Sigmoid colon (tissue), 7 donors: ENCODE measurements at regions of chr11 and their contacts with region 1.

Region 1: GRCh38 chr11:114400217-114400914 is at the starts of genes C11orf71 and RBM7:
- DNase-seq: peak; percentile 99
- H3K4me3 ChIP-seq: peak within 1 kb of the TSS; percentile 64 to 86 (median 79)
- H3K27ac ChIP-seq: peak within 1 kb of the TSS; percentile 91 to 97 (median 92)
- H3K4me1 ChIP-seq: peaks cover 0 to 57% (median 50%) of the 10 kb centered on the region in 4 donors
- H3K27me3 ChIP-seq: no peaks in the 10 kb centered on the region
- CTCF ChIP-seq: peak in 1 of 4 experiments; percentile 13
- EP300 ChIP-seq: peak in 2 of 4 donors; percentile 23 to 60
- POLR2A ChIP-seq: peak; percentile 76 to 95
- total RNA-seq, gene C11orf71: 5.0 to 7.6 (median 6.4) TPM
- total RNA-seq, gene RBM7: 20.5 to 34.4 (median 28.8) TPM

Region 2: GRCh38 chr11:113875234-113876073 is 524.9 kb before region 1 on chr11 and contains the start of gene USP28:
- intact Hi-C with region 1: loop called (anchors 10 kb)
- DNase-seq: peak; percentile 98
- H3K4me3 ChIP-seq: peak within 1 kb of the TSS; percentile 57 to 74 (median 68)
- H3K27ac ChIP-seq: peak within 1 kb of the TSS; percentile 89 to 93 (median 93)
- H3K4me1 ChIP-seq: peaks cover 0 to 44% (median 32%) of the 10 kb centered on the region in 4 donors
- H3K27me3 ChIP-seq: no peaks in the 10 kb centered on the region
- CTCF ChIP-seq: no peak
- EP300 ChIP-seq: peak in 1 of 4 donors; percentile 28
- POLR2A ChIP-seq: peak; percentile 66 to 78
- total RNA-seq, gene USP28: 25.0 to 37.5 (median 31.9) TPM

Region 3: GRCh38 chr11:114280696-114281095 is 119.7 kb before region 1 on chr11:
- intact Hi-C with region 1: loop called (anchors 5 kb)
- DNase-seq: peak; percentile 82
- H3K4me3 ChIP-seq: no peak overlapping the region
- H3K27ac ChIP-seq: peak overlapping the region in 3 of 4 donors; percentile 28 to 47 (median 36)
- H3K4me1 ChIP-seq: peaks cover 0 to 22% (median 20%) of the 10 kb centered on the region in 4 donors
- H3K27me3 ChIP-seq: no peaks in the 10 kb centered on the region
- CTCF ChIP-seq: peak; percentile 31 to 57 (median 48)
- EP300 ChIP-seq: no peak
- POLR2A ChIP-seq: no peak

Region 4: GRCh38 chr11:114295676-114296604 is 104.4 kb before region 1 on chr11 and contains the start of gene NNMT:
- intact Hi-C with region 1: loop called (anchors 5 kb)
- DNase-seq: peak; percentile 90
- H3K4me3 ChIP-seq: peak within 1 kb of the TSS; percentile 24 to 43 (median 40)
- H3K27ac ChIP-seq: peak within 1 kb of the TSS; percentile 81 to 96 (median 86)
- H3K4me1 ChIP-seq: peaks cover 0 to 64% (median 58%) of the 10 kb centered on the region in 4 donors
- H3K27me3 ChIP-seq: no peaks in the 10 kb centered on the region
- CTCF ChIP-seq: no peak
- EP300 ChIP-seq: peak in 3 of 4 donors; percentile 68 to 81 (median 79)
- POLR2A ChIP-seq: peak in 1 of 2 donors; percentile 17
- total RNA-seq, gene NNMT: 126 to 960 (median 409) TPM

Region 5: GRCh38 chr11:114348200-114349191 is 51.9 kb before region 1 on chr11:
- intact Hi-C with region 1: loop called (anchors 5 kb)
- DNase-seq: no peak
- H3K4me3 ChIP-seq: no peak overlapping the region
- H3K27ac ChIP-seq: no peak overlapping the region
- H3K4me1 ChIP-seq: no peaks in the 10 kb centered on the region
- H3K27me3 ChIP-seq: no peaks in the 10 kb centered on the region
- CTCF ChIP-seq: peak; percentile 13 to 64 (median 34)
- EP300 ChIP-seq: no peak
- POLR2A ChIP-seq: no peak

Region 6: GRCh38 chr11:114439229-114440120 is 39.1 kb after region 1 on chr11 and contains the start of gene REXO2:
- intact Hi-C with region 1: loop called (anchors 1 kb)
- DNase-seq: peak; percentile 98
- H3K4me3 ChIP-seq: peak within 1 kb of the TSS; percentile 81 to 99 (median 94)
- H3K27ac ChIP-seq: peak within 1 kb of the TSS; percentile 85 to 95 (median 92)
- H3K4me1 ChIP-seq: peaks cover 2 to 31% (median 18%) of the 10 kb centered on the region in 4 donors
- H3K27me3 ChIP-seq: no peaks in the 10 kb centered on the region
- CTCF ChIP-seq: peak in 2 of 4 experiments; percentile 15 to 27
- EP300 ChIP-seq: no peak
- POLR2A ChIP-seq: peak; percentile 72 to 78
- total RNA-seq, gene REXO2: 158 to 238 (median 200) TPM

Region 7: DNA sequence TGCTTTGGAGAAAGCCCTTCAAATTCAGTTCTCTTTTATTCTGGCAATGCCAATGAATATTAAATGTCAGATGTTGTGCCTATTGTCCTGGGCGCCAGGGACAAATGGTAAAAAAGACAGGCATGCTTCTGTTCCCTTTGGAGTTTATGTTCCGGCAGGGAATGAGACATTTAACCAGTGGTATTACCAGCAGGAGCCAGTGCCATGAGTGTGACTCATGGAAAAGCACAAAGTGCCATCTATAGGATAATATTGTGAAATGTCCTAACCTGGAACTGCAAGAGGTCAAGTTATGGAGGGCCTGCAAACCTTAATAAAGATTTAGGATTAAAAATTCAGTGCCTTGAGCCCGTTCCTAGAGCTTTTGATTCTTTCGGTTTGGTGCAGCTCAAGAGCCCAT is 78.4 kb after region 1 on chr11:
- intact Hi-C with region 1: no loop called
- DNase-seq: no peak
- H3K4me3 ChIP-seq: no peak overlapping the region
- H3K27ac ChIP-seq: peak overlapping the region in 2 of 4 donors; percentile 1 to 35
- H3K4me1 ChIP-seq: peaks cover 0 to 42% (median 34%) of the 10 kb centered on the region in 4 donors
- H3K27me3 ChIP-seq: no peaks in the 10 kb centered on the region
- CTCF ChIP-seq: no peak
- EP300 ChIP-seq: no peak
- POLR2A ChIP-seq: no peak